ENCODE measurements at regions of chr2 and their contacts with region 1.

Region 1: DNA sequence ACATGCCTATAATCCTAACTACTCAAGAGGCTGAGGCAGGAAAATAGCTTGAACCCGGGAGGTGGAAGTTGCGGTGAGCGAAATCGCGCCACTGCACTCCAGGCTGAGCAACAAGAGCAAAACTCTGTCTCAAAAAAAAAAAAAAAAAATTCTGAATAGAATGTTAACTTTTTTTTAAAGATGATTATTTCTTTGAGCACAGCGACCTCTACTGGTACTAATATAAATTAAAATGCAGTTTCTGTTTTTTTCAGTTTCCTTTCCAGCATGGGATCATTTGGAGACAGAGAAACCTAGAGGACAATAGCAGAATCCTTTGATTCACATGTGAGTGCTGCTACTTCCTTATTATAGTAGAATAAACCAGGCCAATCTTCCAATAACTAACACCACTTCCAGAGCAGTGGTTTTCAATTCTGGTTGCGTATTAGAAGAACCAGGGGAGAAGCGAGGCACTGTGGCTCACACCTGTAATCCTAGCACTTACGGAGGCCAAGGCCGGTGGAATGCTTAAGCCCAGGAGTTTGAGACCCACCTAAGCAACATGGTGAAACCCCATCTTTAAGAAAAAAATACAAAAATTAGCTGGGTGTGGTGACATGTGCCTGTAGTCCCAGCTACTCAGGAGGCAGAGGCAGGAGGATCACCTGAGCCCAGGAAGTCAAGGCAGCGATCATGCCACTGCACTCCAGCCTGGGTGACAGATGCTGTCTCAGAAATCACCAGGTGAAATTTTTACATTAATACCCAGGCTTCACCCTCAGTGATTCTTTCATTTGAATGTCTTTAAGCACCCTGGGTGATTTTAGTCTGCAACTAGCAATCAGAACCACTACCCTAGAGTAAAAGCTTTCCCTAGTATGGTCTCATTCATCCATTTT is 10.1 kb downstream of the SRSF7 start:
- DNase-seq: peak in 1 of 2 experiments; percentile 54
- H3K4me3 ChIP-seq: no peak overlapping the region
- H3K4me1 ChIP-seq: 0 out of 2 replicates have a peak, but pooled peaks cover 2% of the 10 kb centered on the region
- H3K27me3 ChIP-seq: no peaks in the 10 kb centered on the region

Region 2: GRCh38 chr2:38315707-38316333 is 425.3 kb before region 1 on chr2:
- in situ Hi-C with region 1: loop called (anchors 25 kb)
- DNase-seq: peak; percentile 48 to 74
- H3K4me3 ChIP-seq: no peak overlapping the region
- H3K4me1 ChIP-seq: no peaks in the 10 kb centered on the region
- H3K27me3 ChIP-seq: no peaks in the 10 kb centered on the region

Region 3: DNA sequence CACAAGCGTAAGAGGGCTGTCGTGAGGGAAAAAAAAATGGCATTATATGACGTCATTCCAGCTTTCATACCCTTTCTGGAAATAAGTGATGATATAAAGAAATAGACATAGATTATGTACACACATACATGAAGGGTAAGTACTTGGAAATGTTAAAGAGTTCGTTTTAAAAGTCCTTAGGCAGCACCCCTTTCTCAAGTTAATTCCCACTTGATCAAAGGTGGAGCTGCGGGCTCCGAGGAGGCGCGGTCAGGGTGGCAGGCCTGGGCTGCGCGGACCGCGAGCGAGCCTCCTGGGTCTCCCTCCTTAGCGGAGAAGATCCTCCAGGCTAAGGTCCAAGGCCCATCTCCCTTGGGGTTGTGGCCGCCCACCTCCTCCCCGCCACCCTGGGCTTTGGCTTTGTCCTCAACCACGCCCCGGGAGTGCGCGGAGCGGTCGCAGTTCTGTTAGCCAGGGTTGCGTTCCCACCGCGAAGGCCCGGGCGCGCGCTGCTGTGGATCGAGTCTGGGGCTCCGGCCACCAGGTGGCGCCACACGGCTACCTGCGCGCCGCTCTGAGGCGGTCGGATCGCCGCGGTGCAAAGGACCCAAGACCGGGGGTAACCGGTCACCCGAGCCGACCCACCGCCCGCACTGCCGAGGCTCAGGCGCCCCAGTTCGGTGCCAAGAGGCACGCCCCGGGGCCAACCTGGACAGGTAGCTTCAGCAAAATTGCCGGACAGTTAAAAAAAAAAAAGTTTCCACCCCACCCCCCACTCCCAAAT is 205.2 kb before region 1 on chr2:
- in situ Hi-C with region 1: loop called (anchors 25 kb)
- DNase-seq: peak; percentile 60 to 93
- H3K4me3 ChIP-seq: peak overlapping the region; percentile 37
- H3K4me1 ChIP-seq: peaks cover 4% of the 10 kb centered on the region
- H3K27me3 ChIP-seq: no peaks in the 10 kb centered on the region

Region 4: GRCh38 chr2:38661306-38661705 is 79.8 kb before region 1 on chr2:
- in situ Hi-C with region 1: no loop called
- DNase-seq: no peak
- H3K4me3 ChIP-seq: no peak overlapping the region
- H3K4me1 ChIP-seq: peaks cover under 1% of the 10 kb centered on the region
- H3K27me3 ChIP-seq: no peaks in the 10 kb centered on the region

Measured in HAP-1 (cell line).